Esophagus squamous epithelium (tissue), 5 donors: ENCODE measurements at regions of chr3 and their contacts with region 1.

Region 1: GRCh38 chr3:71599416-71599815 is 15.9 kb upstream of the FOXP1 start:
- DNase-seq: no peak
- H3K4me3 ChIP-seq: no peak overlapping the region
- H3K27ac ChIP-seq: no peak overlapping the region
- H3K4me1 ChIP-seq: peaks cover 0 to 5% (median 0%) of the 10 kb centered on the region in 3 donors
- H3K27me3 ChIP-seq: no peaks in the 10 kb centered on the region
- CTCF ChIP-seq: no peak
- POLR2A ChIP-seq: no peak

Region 2: DNA sequence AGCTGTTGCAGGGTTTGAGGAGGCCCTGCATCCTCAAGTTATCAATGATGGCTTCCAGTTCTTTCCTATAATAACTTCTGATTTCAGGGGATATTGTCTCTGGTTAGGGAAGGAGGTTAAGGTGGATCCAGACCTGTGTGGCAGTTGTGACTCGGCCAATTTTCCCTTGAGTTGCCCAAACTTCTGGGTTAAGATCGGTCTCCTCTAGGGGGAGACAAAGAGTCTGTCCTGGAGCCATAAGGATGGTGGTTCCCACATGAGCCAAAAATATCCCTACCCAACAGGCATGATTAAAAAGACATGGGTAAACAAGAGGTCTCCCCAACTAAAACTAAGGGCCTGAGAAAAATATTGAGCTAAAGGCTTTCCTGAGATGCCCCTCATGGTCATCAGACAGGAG is 1059.5 kb before region 1 on chr3:
- intact Hi-C with region 1: loop called (anchors 10 kb)
- DNase-seq: no peak
- H3K4me3 ChIP-seq: no peak overlapping the region
- H3K27ac ChIP-seq: no peak overlapping the region
- H3K4me1 ChIP-seq: no peaks in the 10 kb centered on the region
- H3K27me3 ChIP-seq: no peaks in the 10 kb centered on the region
- CTCF ChIP-seq: no peak
- POLR2A ChIP-seq: no peak

Region 3: GRCh38 chr3:71006810-71007785 is 592.3 kb before region 1 on chr3:
- intact Hi-C with region 1: loop called (anchors 10 kb)
- DNase-seq: no peak
- H3K4me3 ChIP-seq: no peak overlapping the region
- H3K27ac ChIP-seq: peak overlapping the region; percentile 2 to 72 (median 51)
- H3K4me1 ChIP-seq: peaks cover 0 to 76% (median 19%) of the 10 kb centered on the region in 3 donors
- H3K27me3 ChIP-seq: no peaks in the 10 kb centered on the region
- CTCF ChIP-seq: peak in 5 of 6 experiments; percentile 21 to 57 (median 53)
- POLR2A ChIP-seq: no peak

Region 4: DNA sequence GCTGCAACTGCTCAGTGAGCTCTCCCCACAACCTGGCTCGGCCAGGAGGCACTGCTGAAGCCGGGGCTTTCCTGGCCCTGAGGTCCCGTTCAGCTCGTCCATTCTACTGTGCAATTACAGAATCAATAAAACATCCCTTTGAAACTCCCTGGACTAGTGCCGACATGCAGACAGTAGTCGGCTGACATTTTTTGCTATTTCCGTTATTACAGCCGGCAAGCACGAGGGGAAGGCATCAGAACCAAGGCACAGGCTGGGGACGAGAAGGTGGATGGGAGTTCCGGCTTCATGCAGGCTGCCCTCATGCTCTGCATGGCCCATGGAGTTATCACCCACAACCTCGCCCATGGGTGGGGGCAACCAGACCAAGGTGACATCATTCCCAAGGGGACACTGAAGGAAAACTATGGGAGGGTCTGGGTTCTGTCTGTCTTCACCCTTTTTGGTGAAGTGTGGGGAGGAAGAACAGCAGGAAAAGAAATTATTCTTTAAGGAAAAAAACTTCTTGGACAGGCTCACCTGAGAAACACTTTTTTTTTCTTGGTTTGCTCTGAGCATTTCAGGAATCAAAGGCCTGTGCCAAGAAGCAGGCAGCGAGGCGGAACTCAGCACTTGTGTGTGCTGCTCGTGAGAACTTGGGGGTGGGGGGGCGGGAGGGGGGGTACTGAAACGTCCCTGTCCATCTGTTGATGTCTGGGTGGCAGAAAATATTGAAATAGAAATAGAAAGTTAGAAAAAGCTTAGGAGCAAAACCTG is 170.4 kb before region 1 on chr3:
- intact Hi-C with region 1: no loop called
- DNase-seq: no peak
- H3K4me3 ChIP-seq: peak overlapping the region in 1 of 4 donors; percentile 41
- H3K27ac ChIP-seq: peak overlapping the region; percentile 65 to 79 (median 77)
- H3K4me1 ChIP-seq: peaks cover 31 to 79% (median 36%) of the 10 kb centered on the region in 3 donors
- H3K27me3 ChIP-seq: no peaks in the 10 kb centered on the region
- CTCF ChIP-seq: no peak
- POLR2A ChIP-seq: no peak